Activated CD4-positive, alpha-beta T cell treated with anti-CD3 and anti-CD28 coated beads, Interleukin-2, amount 10 ng/mL, durations not matched to agents 7 days and 5 days (primary cell): ENCODE measurements at regions of chr11 and their contacts with region 1.

Region 1: GRCh38 chr11:67265633-67266423 is 445 bp upstream of the GRK2 start:
- DNase-seq: peak; percentile 70
- H3K4me3 Mint-ChIP-seq: peak overlapping the region; percentile 76
- H3K27ac Mint-ChIP-seq: peak overlapping the region; percentile 77
- H3K4me1 Mint-ChIP-seq: peaks cover 61% of the 10 kb centered on the region
- H3K27me3 Mint-ChIP-seq: no peaks in the 10 kb centered on the region

Region 2: DNA sequence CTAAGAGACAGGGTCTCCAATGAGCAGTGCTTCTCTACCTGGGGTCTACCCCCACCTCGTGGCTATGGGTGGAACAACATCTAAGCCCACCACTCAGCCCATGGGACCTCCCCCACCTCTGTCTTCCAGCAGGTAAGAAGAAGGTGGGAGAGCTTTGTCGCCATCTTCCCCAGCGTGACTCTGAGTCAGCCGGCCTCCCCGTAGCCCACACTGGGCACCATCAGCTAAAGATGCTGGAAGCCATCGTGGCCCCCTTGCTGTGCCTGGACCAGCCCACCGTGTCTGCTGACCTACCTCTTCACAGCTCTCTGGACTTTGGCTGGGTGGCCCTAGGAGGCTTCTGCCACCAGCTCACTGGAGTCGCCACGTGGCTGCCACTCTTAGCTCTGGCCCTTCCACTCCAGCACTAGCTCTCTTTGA is 289.8 kb before region 1 on chr11:
- CTCF ChIA-PET with region 1: no interaction called
- POLR2A ChIA-PET with region 1: no interaction called
- DNase-seq: no peak
- H3K4me3 Mint-ChIP-seq: no peak overlapping the region
- H3K27ac Mint-ChIP-seq: no peak overlapping the region
- H3K4me1 Mint-ChIP-seq: peaks cover under 1% of the 10 kb centered on the region
- H3K27me3 Mint-ChIP-seq: no peaks in the 10 kb centered on the region

Region 3: GRCh38 chr11:67174311-67174710 is 91.5 kb before region 1 on chr11:
- CTCF ChIA-PET with region 1: no interaction called
- POLR2A ChIA-PET with region 1: no interaction called
- DNase-seq: no peak
- H3K4me3 Mint-ChIP-seq: no peak overlapping the region
- H3K27ac Mint-ChIP-seq: no peak overlapping the region
- H3K4me1 Mint-ChIP-seq: peaks cover 6% of the 10 kb centered on the region
- H3K27me3 Mint-ChIP-seq: no peaks in the 10 kb centered on the region

Region 4: GRCh38 chr11:67239783-67240575 is 25.8 kb before region 1 on chr11:
- CTCF ChIA-PET with region 1: interaction called, 12 read pairs
- POLR2A ChIA-PET with region 1: interaction called, 7 read pairs
- DNase-seq: peak; percentile 98
- H3K4me3 Mint-ChIP-seq: peak overlapping the region; percentile 99
- H3K27ac Mint-ChIP-seq: peak overlapping the region; percentile 99
- H3K4me1 Mint-ChIP-seq: peaks cover 55% of the 10 kb centered on the region
- H3K27me3 Mint-ChIP-seq: no peaks in the 10 kb centered on the region

Region 5: DNA sequence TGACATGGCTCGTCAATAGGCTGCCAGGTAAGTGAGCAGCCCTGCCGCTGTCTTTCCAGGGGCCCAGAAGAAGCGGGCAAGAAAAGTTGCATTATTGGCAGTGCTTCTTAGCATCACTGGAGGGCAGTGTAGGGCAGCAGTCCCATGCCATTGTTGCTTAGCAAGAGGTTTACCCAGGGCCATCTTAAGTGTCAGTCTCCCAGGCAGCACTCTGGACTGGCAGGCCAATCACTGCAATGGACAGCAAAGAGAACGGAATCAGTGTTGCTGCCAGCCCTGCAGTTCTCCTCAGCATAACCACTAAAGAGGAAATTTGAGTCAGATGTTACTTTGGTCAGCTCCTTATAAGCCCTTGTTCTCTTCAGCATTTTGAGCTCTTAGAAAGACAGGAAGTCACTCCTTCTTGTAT is 13.0 kb before region 1 on chr11:
- CTCF ChIA-PET with region 1: interaction called, 32 read pairs
- POLR2A ChIA-PET with region 1: interaction called, 3 read pairs
- DNase-seq: peak; percentile 48
- H3K4me3 Mint-ChIP-seq: no peak overlapping the region
- H3K27ac Mint-ChIP-seq: peak overlapping the region; percentile 72
- H3K4me1 Mint-ChIP-seq: peaks cover 47% of the 10 kb centered on the region
- H3K27me3 Mint-ChIP-seq: no peaks in the 10 kb centered on the region

Region 6: DNA sequence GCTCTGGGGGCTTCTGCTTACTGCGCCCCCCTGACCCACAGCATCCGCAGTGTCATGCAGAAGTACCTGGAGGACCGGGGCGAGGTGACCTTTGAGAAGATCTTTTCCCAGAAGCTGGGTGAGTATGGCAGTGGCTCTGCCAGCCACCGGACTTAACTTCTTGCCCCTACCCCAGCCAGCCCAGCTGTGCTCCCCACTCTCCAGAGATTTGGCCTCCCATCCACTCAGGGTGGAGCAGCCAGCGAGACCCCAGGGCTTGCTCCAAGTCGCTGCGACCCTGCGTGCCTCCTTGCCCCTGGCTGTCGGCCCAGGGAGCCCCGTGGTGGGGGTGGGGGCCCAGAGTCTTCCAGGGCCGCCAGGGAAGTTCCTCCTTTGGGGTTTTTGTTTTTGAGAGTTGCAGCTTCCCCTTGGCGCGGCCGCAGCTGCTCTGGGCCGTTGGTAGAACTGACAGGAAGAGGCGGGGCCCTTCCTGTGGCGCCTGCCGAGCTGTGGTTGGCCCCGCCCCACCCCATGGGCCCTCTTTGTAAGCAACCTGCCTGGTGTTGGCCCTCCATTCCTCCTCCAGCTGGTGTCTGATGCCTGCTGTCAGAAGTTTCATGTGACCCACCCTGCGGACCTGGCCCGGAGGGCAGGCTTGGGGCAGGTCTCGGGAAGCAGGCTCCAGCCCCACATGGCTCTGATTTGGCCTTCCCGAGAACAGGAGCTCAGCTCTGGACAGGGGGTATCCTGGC is 11.6 kb after region 1 on chr11:
- CTCF ChIA-PET with region 1: interaction called, 36 read pairs
- POLR2A ChIA-PET with region 1: interaction called, 4 read pairs
- DNase-seq: peak; percentile 95
- H3K4me3 Mint-ChIP-seq: peak overlapping the region; percentile 78
- H3K27ac Mint-ChIP-seq: peak overlapping the region; percentile 93
- H3K4me1 Mint-ChIP-seq: peaks cover 81% of the 10 kb centered on the region
- H3K27me3 Mint-ChIP-seq: no peaks in the 10 kb centered on the region

Region 7: GRCh38 chr11:67288452-67289225 is 22.8 kb after region 1 on chr11:
- CTCF ChIA-PET with region 1: interaction called, 36 read pairs
- POLR2A ChIA-PET with region 1: interaction called, 10 read pairs
- DNase-seq: peak; percentile 92
- H3K4me3 Mint-ChIP-seq: peak overlapping the region; percentile 73
- H3K27ac Mint-ChIP-seq: peak overlapping the region; percentile 98
- H3K4me1 Mint-ChIP-seq: peaks cover 72% of the 10 kb centered on the region
- H3K27me3 Mint-ChIP-seq: no peaks in the 10 kb centered on the region

Region 8: GRCh38 chr11:67303132-67303834 is 37.5 kb after region 1 on chr11 and contains the start of gene SSH3:
- CTCF ChIA-PET with region 1: interaction called, 16 read pairs
- POLR2A ChIA-PET with region 1: no interaction called
- DNase-seq: no peak
- H3K4me3 Mint-ChIP-seq: peak within 1 kb of the TSS; percentile 43
- H3K27ac Mint-ChIP-seq: no peak within 1 kb of the TSS
- H3K4me1 Mint-ChIP-seq: peaks cover 13% of the 10 kb centered on the region
- H3K27me3 Mint-ChIP-seq: no peaks in the 10 kb centered on the region
- total RNA-seq, gene SSH3: 8.2 to 9.6 TPM

Region 9: GRCh38 chr11:67353317-67354074 is 87.7 kb after region 1 on chr11 and contains the start of gene POLD4:
- CTCF ChIA-PET with region 1: interaction called, 16 read pairs
- POLR2A ChIA-PET with region 1: interaction called, 4 read pairs
- DNase-seq: peak; percentile 97
- H3K4me3 Mint-ChIP-seq: peak within 1 kb of the TSS; percentile 89
- H3K27ac Mint-ChIP-seq: peak within 1 kb of the TSS; percentile 99
- H3K4me1 Mint-ChIP-seq: peaks cover 36% of the 10 kb centered on the region
- H3K27me3 Mint-ChIP-seq: peaks cover 8% of the 10 kb centered on the region
- total RNA-seq, gene POLD4: 52.7 to 53.7 TPM

Region 10: DNA sequence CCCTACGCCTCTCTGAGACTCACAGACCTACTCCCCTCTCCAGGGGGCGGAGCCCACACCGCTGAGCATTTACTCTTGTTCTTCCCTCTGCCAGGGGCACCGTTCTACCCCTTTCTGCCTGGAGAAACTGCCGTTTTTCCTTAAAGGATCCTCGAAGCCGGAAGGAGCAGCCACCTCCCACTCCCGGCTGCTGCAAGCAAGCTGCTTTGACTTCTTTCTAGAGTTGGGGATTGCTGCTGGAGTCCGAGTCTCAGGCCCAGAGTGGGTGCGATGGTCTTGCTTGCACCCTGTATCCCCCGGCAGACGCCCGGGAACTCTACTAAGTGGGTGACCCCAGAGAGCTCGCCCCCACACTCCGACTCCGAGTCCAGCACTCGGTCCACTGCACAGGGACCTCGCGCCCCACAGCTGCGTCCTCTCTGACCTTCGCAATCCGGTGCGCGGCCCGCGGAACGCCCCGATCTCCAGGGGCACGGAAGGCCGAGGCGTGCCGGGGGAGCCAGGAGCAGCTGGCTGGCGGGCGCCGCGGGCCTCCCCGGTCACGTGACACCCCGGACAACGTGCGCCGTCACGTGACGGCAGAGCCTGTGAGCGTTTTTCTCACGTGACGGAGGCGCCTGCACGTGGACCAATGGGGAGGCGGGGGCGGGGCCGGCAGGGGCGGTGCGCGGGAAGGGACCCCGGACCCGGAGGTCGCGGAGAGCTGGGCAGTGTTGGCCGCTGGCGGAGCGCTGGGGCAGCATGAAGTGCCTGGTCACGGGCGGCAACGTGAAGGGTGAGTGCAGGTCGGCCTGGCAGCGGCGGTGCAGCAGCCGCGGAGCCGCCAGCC is 125.7 kb after region 1 on chr11 and contains the start of gene RAD9A:
- CTCF ChIA-PET with region 1: no interaction called
- POLR2A ChIA-PET with region 1: no interaction called
- DNase-seq: peak; percentile 94
- H3K4me3 Mint-ChIP-seq: peak within 1 kb of the TSS; percentile 91
- H3K27ac Mint-ChIP-seq: peak within 1 kb of the TSS; percentile 78
- H3K4me1 Mint-ChIP-seq: peaks cover 38% of the 10 kb centered on the region
- H3K27me3 Mint-ChIP-seq: peaks cover 2% of the 10 kb centered on the region
- total RNA-seq, gene RAD9A: 49.3 to 53.7 TPM

Region 11: DNA sequence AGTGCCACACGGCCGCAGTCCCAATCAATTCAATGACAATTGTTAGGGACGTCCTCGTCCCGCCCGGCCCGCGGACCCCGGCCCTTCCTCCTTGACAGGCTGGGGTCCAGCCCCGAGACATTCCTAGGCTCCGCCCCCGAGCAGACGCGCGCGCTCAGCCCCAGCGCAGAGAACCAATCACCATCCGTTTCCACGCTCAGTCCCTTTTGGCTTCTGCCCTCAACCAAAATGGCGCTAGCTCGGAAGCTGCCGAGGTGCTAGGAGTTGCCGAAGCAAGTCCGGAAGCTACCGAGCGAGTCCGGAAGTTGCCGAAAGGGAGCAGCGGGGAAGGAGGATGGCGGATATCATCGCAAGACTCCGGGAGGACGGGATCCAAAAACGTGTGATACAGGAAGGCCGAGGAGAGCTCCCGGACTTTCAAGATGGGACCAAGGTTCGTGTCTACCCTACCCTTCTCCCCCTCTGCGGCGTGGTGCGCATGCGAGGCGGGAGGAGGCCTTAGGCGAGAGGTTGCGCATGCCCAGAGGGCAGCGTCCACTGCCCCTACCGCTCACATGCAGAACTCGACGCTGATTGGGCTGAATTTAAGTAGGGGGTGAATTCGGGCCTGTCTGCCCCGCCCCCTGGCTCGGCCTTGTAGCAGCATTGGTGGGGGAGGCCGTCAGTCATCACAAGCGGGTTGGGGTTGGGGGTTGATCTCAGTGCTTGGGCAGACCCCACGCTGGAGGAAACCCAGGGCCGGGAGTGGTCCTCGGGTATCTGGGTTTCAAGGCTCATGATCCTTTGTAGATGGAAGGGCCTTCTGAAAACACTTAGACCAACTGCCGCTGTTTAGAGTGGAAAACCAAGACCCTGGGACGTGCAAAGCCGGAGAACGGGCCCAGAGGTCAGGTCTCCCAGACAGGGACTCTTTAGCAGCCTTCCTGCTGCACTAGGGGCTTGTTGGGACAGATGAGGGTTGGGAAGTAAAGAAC is 217.3 kb after region 1 on chr11 and contains the start of gene AIP:
- CTCF ChIA-PET with region 1: no interaction called
- POLR2A ChIA-PET with region 1: no interaction called
- DNase-seq: peak; percentile 99
- H3K4me3 Mint-ChIP-seq: peak within 1 kb of the TSS; percentile 86
- H3K27ac Mint-ChIP-seq: peak within 1 kb of the TSS; percentile 99
- H3K4me1 Mint-ChIP-seq: peaks cover 48% of the 10 kb centered on the region
- H3K27me3 Mint-ChIP-seq: no peaks in the 10 kb centered on the region
- total RNA-seq, gene AIP: 149 to 164 TPM